ENCODE measurements at regions of chrX and their contacts with region 1.

Region 1: GRCh38 chrX:13646154-13646549 is 6.8 kb upstream of the TCEANC start:
- DNase-seq: peak in 5 of 9 experiments; percentile 20 to 48 (median 31)
- ATAC-seq: no peak
- H3K4me3 ChIP-seq: no peak overlapping the region
- H3K4me3 Mint-ChIP-seq: no peak overlapping the region
- H3K27ac ChIP-seq: no peak overlapping the region
- H3K27ac Mint-ChIP-seq: peak overlapping the region; percentile 64
- H3K4me1 ChIP-seq: no peaks in the 10 kb centered on the region
- H3K4me1 Mint-ChIP-seq: peaks cover 14% of the 10 kb centered on the region
- H3K27me3 ChIP-seq: no peaks in the 10 kb centered on the region
- H3K27me3 Mint-ChIP-seq: no peaks in the 10 kb centered on the region
- CTCF ChIP-seq: no peak

Region 2: GRCh38 chrX:13506574-13506973 is 139.6 kb before region 1 on chrX:
- CTCF ChIA-PET with region 1: interaction called, 14 read pairs
- POLR2A ChIA-PET with region 1: no interaction called
- intact Hi-C with region 1: loop called (anchors 1 to 2 kb)
- DNase-seq: peak in 8 of 9 experiments; percentile 13 to 70 (median 56)
- ATAC-seq: no peak
- H3K4me3 ChIP-seq: no peak overlapping the region
- H3K4me3 Mint-ChIP-seq: no peak overlapping the region
- H3K27ac ChIP-seq: no peak overlapping the region
- H3K27ac Mint-ChIP-seq: no peak overlapping the region
- H3K4me1 ChIP-seq: no peaks in the 10 kb centered on the region
- H3K4me1 Mint-ChIP-seq: peaks cover 2% of the 10 kb centered on the region
- H3K27me3 ChIP-seq: no peaks in the 10 kb centered on the region
- H3K27me3 Mint-ChIP-seq: no peaks in the 10 kb centered on the region
- CTCF ChIP-seq: peak; percentile 65

Measured in CD8-positive, alpha-beta T cell (primary cell).